ENCODE measurements at regions of chr10 and their contacts with region 1.

Region 1: DNA sequence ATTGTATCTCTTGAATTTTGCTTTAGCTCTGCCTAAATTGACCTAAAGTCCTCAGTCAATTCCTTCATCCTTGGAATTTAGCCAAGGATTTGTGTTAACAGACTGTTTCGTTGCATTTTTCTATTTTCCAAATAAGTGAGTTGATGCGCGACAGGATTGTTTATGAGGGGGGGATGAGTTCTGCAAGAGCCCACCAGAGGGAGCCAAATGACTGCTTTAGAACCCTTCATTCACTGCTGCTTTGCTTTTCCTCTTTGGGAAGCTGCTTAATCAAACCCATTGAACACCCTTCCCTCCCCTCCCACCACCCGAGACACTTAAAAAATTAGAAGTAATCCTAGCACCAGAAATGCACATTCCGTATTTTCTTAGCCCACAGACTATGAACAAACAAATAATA is 33.7 kb upstream of the PTF1A start:
- H3K4me3 ChIP-seq: no peak overlapping the region
- H3K27ac ChIP-seq: no peak overlapping the region
- H3K4me1 ChIP-seq: no peaks in the 10 kb centered on the region
- CTCF ChIP-seq: peak; percentile 63

Region 2: DNA sequence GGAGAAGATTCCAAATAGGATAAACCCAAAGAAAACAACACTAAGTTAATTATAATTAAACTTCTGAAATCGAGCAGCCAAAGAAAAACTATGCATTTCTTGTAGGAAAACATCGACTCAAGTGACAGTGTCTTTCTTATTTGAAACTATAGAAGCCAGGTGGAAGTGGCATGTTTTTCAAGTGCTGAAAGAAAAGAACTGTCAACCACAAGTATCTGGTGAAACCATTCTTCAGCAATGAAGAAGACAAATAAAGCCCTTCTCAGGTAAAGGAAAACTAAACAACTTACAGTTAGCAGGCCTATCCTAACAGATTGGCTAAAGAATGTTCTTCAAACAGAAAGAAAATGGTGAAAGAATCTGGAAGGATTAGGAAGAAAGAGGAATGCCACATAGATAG is 134.4 kb before region 1 on chr10:
- CTCF ChIA-PET with region 1: no interaction called
- POLR2A ChIA-PET with region 1: no interaction called
- H3K4me3 ChIP-seq: no peak overlapping the region
- H3K27ac ChIP-seq: no peak overlapping the region
- H3K4me1 ChIP-seq: no peaks in the 10 kb centered on the region
- CTCF ChIP-seq: no peak

Region 3: DNA sequence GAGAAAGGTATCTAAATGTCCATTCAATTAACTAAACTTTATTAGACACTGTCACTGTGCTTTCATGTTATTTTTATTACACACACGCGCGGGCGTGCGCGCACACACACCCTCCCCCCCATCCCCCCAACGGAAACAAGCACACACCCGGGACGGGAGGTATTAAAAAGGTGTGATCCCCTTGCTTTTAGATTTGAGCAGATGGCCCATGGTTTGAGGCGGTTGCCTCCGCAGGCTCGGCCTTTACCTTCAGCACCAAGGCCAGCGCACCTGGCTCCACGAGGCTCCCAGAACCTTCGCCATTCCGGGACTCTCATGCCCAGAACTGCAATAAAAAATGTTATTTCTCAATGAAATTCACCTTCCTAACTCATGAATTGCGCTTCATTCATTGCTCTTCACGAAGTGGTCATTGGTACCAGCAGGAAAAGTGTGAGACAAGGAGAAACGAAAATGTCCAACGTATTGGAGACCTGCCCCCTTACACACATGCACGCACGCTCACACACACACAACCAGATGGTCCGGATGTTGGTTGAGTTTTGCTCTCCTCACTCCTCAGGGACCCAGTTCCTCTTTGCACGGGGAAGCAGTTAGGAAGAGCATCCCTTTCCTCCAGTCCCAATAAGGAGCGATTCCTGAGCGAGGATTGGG is 13.0 kb after region 1 on chr10:
- CTCF ChIA-PET with region 1: interaction called, 30 read pairs
- POLR2A ChIA-PET with region 1: no interaction called
- H3K4me3 ChIP-seq: no peak overlapping the region
- H3K27ac ChIP-seq: no peak overlapping the region
- H3K4me1 ChIP-seq: no peaks in the 10 kb centered on the region; the same call in 1 of the 2 replicates
- CTCF ChIP-seq: no peak

Region 4: DNA sequence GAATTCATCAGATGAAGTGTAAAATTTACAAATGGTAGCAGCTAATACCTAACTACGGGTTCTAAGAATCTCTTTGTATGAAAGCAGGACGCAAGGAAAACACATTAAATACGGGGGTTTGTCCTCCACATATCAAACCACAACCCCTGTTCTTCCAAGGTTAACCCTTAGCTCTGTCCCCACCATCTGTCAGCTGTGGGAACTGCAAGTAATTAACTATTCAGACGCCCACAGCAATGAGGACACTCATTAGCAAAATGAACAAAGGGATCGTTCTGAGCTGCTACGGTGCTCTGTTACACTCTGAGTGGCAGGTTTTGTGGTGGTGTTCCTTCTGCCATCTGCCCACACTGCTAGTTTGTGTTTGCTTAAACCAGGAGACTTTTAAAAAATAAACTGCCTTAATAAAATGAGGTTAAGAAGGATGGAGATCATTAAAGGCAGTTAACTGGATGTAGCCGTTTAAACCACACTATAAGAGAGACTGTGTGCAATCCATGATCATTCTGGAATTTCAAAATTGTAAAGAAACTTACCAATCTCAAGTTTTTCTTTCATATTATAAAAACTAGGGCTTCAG is 134.9 kb after region 1 on chr10:
- CTCF ChIA-PET with region 1: interaction called, 96 read pairs
- POLR2A ChIA-PET with region 1: no interaction called
- H3K4me3 ChIP-seq: no peak overlapping the region
- H3K27ac ChIP-seq: no peak overlapping the region
- H3K4me1 ChIP-seq: no peaks in the 10 kb centered on the region
- CTCF ChIP-seq: no peak

Region 5: GRCh38 chr10:23314835-23315239 is 156.5 kb after region 1 on chr10:
- CTCF ChIA-PET with region 1: interaction called, 10 read pairs
- POLR2A ChIA-PET with region 1: no interaction called
- H3K4me3 ChIP-seq: no peak overlapping the region
- H3K27ac ChIP-seq: no peak overlapping the region
- H3K4me1 ChIP-seq: no peaks in the 10 kb centered on the region
- CTCF ChIP-seq: no peak

Region 6: GRCh38 chr10:23525406-23525805 is 367.0 kb after region 1 on chr10:
- CTCF ChIA-PET with region 1: interaction called, 11 read pairs
- POLR2A ChIA-PET with region 1: no interaction called
- H3K4me3 ChIP-seq: no peak overlapping the region
- H3K27ac ChIP-seq: no peak overlapping the region
- H3K4me1 ChIP-seq: no peaks in the 10 kb centered on the region
- CTCF ChIP-seq: no peak

Region 7: GRCh38 chr10:23702977-23703414 is 544.6 kb after region 1 on chr10:
- CTCF ChIA-PET with region 1: interaction called, 10 read pairs
- POLR2A ChIA-PET with region 1: no interaction called
- H3K4me3 ChIP-seq: no peak overlapping the region
- H3K27ac ChIP-seq: no peak overlapping the region
- H3K4me1 ChIP-seq: no peaks in the 10 kb centered on the region
- CTCF ChIP-seq: peak; percentile 66

Measured in HEK293 (cell line).